ENCODE measurements at regions of chr1 and their contacts with region 1.

Region 1: DNA sequence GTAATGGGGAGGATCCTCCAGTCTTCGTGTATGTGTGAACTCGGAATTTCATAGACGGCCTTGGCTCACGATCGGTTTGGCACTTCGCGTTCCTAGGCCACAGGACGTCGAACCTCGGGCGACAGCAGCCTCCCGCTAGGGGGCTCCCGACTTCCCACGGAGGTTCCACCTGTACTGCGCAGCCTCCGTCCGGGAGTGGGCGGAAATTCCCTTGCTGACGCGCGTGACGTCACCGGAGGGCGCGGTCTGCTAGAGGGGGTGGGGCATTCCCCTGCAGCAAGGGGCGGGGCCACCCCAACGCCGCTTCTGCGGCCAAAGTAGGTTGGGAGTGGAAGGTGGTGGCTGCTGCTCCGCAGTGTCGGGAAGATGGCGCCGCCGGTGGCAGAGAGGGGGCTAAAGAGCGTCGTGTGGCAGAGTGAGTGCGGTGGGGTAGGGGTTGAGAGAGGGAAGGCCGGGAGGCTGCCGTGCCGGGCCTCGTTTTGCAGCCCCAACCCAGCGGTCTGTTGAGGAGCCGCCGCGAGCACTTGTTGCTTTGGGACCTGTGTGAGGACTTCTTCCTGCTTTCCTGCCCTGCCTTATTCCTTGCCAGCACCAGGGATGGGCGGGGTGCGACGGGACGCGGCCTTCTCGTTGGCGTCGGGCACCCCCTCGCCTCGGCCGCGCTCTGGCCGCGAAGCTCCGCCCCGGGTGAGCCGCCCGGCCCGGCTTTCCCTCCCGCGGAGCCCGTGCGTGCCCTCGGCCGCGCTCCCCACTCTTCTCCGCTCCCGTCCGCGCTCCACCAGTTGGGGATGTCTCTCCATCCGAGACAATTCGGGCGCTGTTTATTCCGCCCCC is at the start of gene STXBP3:
- DNase-seq: peak; percentile 96
- ATAC-seq: peak; percentile 88
- H3K4me3 ChIP-seq: peak within 1 kb of the TSS; percentile 65 to 89
- H3K27ac ChIP-seq: peak within 1 kb of the TSS; percentile 86
- H3K4me1 ChIP-seq: peaks cover 3 to 12% of the 10 kb centered on the region in 2 experiments; a peak in 3 of 4 replicates
- H3K27me3 ChIP-seq: no peaks in the 10 kb centered on the region
- CTCF ChIP-seq: peak; percentile 67 to 94 (median 93); a peak in 5 of 6 replicates
- POLR2A ChIP-seq: peak; percentile 74
- RAD21 ChIP-seq: peak; percentile 53
- total RNA-seq, gene STXBP3: 22.6 TPM

Region 2: GRCh38 chr1:108691942-108692723 is 54.5 kb before region 1 on chr1 and contains the start of gene PRPF38B:
- CTCF ChIA-PET with region 1: no interaction called
- POLR2A ChIA-PET with region 1: no interaction called
- RAD21 ChIA-PET with region 1: no interaction called
- intact Hi-C with region 1: loop called (anchors 5 kb)
- DNase-seq: peak; percentile 82
- ATAC-seq: peak; percentile 91
- H3K4me3 ChIP-seq: peak within 1 kb of the TSS; percentile 82 to 83
- H3K27ac ChIP-seq: peak within 1 kb of the TSS; percentile 92
- H3K4me1 ChIP-seq: peaks cover 11 to 23% of the 10 kb centered on the region in 2 experiments; a peak in 3 of 4 replicates
- H3K27me3 ChIP-seq: no peaks in the 10 kb centered on the region
- CTCF ChIP-seq: no peak
- POLR2A ChIP-seq: peak; percentile 84
- RAD21 ChIP-seq: no peak
- total RNA-seq, gene PRPF38B: 46.4 TPM

Region 3: GRCh38 chr1:108708691-108709660 is 37.6 kb before region 1 on chr1:
- CTCF ChIA-PET with region 1: no interaction called
- POLR2A ChIA-PET with region 1: no interaction called
- RAD21 ChIA-PET with region 1: no interaction called
- intact Hi-C with region 1: no loop called
- DNase-seq: no peak
- ATAC-seq: peak; percentile 87
- H3K4me3 ChIP-seq: no peak overlapping the region
- H3K27ac ChIP-seq: no peak overlapping the region
- H3K4me1 ChIP-seq: peaks cover 5 to 10% of the 10 kb centered on the region in 2 experiments
- H3K27me3 ChIP-seq: no peaks in the 10 kb centered on the region
- CTCF ChIP-seq: peak in 2 of 3 experiments; percentile 42 to 48; a peak in 3 of 6 replicates
- POLR2A ChIP-seq: no peak
- RAD21 ChIP-seq: peak; percentile 35; the same call in 1 of the 2 replicates

Region 4: GRCh38 chr1:108897865-108898720 is 151.5 kb after region 1 on chr1:
- CTCF ChIA-PET with region 1: no interaction called
- POLR2A ChIA-PET with region 1: no interaction called
- RAD21 ChIA-PET with region 1: no interaction called
- intact Hi-C with region 1: loop called (anchors 1 kb)
- DNase-seq: peak; percentile 40
- ATAC-seq: peak; percentile 81
- H3K4me3 ChIP-seq: no peak overlapping the region
- H3K27ac ChIP-seq: no peak overlapping the region
- H3K4me1 ChIP-seq: no peaks in the 10 kb centered on the region
- H3K27me3 ChIP-seq: no peaks in the 10 kb centered on the region
- CTCF ChIP-seq: peak; percentile 54 to 79 (median 71)
- POLR2A ChIP-seq: no peak
- RAD21 ChIP-seq: peak; percentile 78

Measured in HCT116 (cell line).